Mammary epithelial cell (primary cell): ENCODE measurements at regions of chr6 and their contacts with region 1.

Region 1: DNA sequence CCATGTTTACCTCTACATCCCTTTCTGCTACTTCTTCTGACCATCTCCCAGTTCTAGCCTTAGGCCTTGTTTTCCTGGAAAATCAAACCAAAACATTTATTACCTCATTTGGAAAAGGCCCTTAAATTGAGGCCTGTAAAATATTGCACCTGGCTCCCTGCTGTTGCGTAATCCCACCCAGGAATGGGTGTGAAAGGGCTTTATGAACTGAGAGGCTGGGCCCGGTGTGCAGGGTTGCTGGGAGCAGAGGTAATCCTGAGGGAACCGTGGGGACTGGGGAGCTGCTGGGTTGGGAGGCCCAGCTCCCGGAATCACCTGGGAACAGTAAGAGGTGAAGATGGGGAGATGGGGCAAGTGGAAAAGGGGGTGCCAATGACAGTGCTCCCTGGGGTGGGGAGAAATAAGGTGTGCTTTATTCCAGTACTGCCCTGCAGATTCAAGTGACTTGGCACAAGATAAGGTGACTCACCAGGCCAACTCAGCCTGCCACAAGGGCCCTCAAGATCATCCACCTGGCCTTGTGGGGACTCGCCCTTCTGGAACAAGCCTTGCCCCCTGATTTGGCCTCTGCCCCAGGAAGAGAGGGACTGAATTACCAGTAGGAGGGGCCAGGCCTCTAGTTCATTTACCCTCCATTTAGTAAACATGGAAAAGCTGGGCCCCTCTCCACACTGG is 44.2 kb downstream of the KCNK5 start:
- DNase-seq: peak; percentile 54
- H3K4me3 ChIP-seq: no peak overlapping the region
- H3K27ac ChIP-seq: no peak overlapping the region
- H3K4me1 ChIP-seq: peaks cover 13% of the 10 kb centered on the region
- H3K27me3 ChIP-seq: peaks cover 3% of the 10 kb centered on the region
- CTCF ChIP-seq: no peak

Region 2: DNA sequence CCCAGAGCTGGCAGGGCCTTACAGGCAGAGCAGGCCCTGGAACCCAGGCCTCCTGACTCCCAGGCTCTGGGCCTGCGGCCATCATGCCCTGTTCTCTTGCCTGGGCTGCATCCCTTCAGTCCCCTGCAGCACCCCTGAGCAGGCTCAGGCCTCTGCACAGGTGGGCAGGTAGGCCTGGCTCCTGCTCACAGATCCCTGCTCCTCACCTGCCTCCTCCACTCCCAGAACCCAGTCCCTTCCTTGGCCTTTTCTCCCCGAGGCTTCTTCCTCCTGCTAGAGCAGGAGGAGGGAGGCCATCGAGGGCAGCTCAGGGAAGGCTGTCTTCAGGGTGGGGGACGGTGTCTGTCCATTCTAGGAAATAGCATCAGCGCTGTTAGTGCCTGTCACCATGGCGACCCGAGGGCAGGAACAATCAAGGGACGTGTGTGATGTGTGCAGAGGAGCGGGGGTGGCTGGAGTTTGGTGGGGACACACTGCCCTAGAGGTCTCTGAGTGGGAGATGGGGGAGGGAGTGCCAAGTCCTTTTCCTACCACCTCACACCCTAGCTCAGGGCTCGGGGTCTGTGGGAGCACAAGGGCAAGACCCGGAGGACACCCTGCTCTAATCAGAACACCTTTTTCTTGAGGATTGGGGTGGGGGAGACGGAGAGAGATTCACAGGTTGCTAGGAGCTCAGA is 109.9 kb before region 1 on chr6:
- CTCF ChIA-PET with region 1: no interaction called
- dilution Hi-C with region 1: no loop called
- in situ Hi-C with region 1: no loop called
- intact Hi-C with region 1: no loop called
- DNase-seq: no peak
- H3K4me3 ChIP-seq: no peak overlapping the region
- H3K27ac ChIP-seq: no peak overlapping the region
- H3K4me1 ChIP-seq: no peaks in the 10 kb centered on the region
- H3K27me3 ChIP-seq: peaks cover 3% of the 10 kb centered on the region
- CTCF ChIP-seq: no peak

Region 3: DNA sequence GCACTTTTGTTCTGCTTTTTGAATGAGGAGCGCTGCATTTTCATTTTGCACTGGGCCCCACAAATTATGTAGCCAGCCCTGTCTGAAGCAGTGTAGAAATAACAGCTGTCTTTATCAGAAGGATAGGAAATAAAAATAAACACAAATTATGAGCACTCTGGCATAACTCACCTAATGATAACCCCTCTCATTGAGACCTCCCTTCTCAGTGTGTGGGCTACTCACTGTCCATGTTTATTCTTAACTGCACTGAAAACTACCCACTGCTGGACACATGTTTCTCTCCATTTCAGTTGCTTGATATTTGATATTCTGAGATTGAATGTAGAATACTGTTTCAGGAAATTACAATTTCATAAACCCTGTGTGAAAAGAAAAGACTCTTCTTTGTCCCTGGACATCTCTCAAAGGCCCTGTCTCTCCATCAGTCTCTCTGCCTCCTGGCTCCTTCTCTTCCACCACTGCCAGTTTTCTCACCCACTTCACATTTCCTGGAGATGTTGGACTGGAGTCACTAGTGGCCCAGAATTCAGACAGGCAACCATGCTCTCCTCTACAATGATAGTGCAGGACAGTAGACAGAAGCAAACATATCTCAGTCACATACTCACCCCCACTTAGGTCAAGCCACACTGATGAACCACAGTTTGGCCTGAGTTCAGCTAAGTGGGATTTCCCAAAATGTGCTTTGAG is 40.4 kb before region 1 on chr6:
- CTCF ChIA-PET with region 1: no interaction called
- dilution Hi-C with region 1: loop called (anchors 5 kb)
- in situ Hi-C with region 1: no loop called
- intact Hi-C with region 1: no loop called
- DNase-seq: no peak
- H3K4me3 ChIP-seq: no peak overlapping the region
- H3K27ac ChIP-seq: no peak overlapping the region
- H3K4me1 ChIP-seq: no peaks in the 10 kb centered on the region
- H3K27me3 ChIP-seq: peaks cover 2% of the 10 kb centered on the region
- CTCF ChIP-seq: no peak

Region 4: GRCh38 chr6:39263303-39264037 is 78.4 kb after region 1 on chr6:
- CTCF ChIA-PET with region 1: no interaction called
- dilution Hi-C with region 1: loop called (anchors 5 kb)
- in situ Hi-C with region 1: no loop called
- intact Hi-C with region 1: no loop called
- DNase-seq: peak; percentile 16
- H3K4me3 ChIP-seq: no peak overlapping the region
- H3K27ac ChIP-seq: no peak overlapping the region
- H3K4me1 ChIP-seq: no peaks in the 10 kb centered on the region
- H3K27me3 ChIP-seq: no peaks in the 10 kb centered on the region
- CTCF ChIP-seq: no peak

Region 5: GRCh38 chr6:39289490-39289889 is 104.4 kb after region 1 on chr6:
- CTCF ChIA-PET with region 1: no interaction called
- dilution Hi-C with region 1: loop called (anchors 5 kb)
- in situ Hi-C with region 1: no loop called
- intact Hi-C with region 1: no loop called
- DNase-seq: no peak
- H3K4me3 ChIP-seq: no peak overlapping the region
- H3K27ac ChIP-seq: no peak overlapping the region
- H3K4me1 ChIP-seq: no peaks in the 10 kb centered on the region
- H3K27me3 ChIP-seq: peaks cover 2% of the 10 kb centered on the region
- CTCF ChIP-seq: no peak

Region 6: GRCh38 chr6:39330057-39330456 is 145.0 kb after region 1 on chr6:
- CTCF ChIA-PET with region 1: no interaction called
- dilution Hi-C with region 1: loop called (anchors 5 kb)
- in situ Hi-C with region 1: no loop called
- intact Hi-C with region 1: no loop called
- DNase-seq: no peak
- H3K4me3 ChIP-seq: no peak overlapping the region
- H3K27ac ChIP-seq: no peak overlapping the region
- H3K4me1 ChIP-seq: no peaks in the 10 kb centered on the region
- H3K27me3 ChIP-seq: peaks cover 2% of the 10 kb centered on the region
- CTCF ChIP-seq: no peak